ENCODE measurements at regions of chr6 and their contacts with region 1.

Region 1: DNA sequence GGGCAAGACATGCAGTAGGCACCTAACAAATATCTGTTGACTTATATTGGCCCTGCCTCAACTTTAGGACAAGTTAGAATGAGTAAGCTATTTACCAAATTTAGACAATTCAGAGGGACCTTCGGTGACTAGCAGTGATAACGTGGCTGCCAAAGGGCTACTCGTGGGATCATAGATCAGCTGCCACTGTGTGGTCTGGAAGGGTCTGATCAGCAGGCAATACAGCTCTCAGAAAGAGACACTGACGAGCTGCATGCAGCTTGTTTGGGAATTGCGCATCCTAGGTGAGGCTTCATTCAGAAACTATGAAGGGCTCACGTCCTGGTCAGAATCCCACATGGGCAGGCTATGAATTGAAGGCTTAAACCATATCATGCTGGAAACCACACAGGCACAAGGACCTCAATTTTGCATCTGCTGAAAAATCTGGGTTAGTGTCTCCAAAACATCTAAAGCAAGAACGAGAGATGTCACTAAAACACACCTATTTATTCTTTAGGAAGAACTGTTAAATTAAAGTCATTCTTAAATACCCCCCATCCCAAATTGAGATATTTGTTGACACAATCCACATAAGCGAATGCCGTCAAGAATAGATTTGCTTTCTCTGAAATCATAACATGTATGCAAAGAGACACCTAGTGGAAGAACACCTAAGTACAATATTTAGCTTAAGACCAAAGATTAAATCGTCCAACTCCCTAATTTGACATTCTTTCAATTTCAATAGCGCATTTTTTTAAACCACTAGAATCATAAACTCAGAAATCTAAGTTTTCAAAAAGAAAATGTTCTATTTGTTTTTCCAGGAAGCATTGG is 79.6 kb downstream of the IPCEF1 start:
- H3K4me3 ChIP-seq: no peak overlapping the region
- H3K27ac ChIP-seq: no peak overlapping the region
- H3K4me1 ChIP-seq: no peaks in the 10 kb centered on the region
- CTCF ChIP-seq: no peak

Region 2: GRCh38 chr6:154156135-154156896 is 120.7 kb before region 1 on chr6:
- CTCF ChIA-PET with region 1: interaction called, 53 read pairs
- POLR2A ChIA-PET with region 1: no interaction called
- H3K4me3 ChIP-seq: no peak overlapping the region
- H3K27ac ChIP-seq: no peak overlapping the region
- H3K4me1 ChIP-seq: no peaks in the 10 kb centered on the region
- CTCF ChIP-seq: peak; percentile 67

Region 3: GRCh38 chr6:154258064-154258757 is 18.8 kb before region 1 on chr6:
- CTCF ChIA-PET with region 1: interaction called, 10 read pairs
- POLR2A ChIA-PET with region 1: no interaction called
- H3K4me3 ChIP-seq: no peak overlapping the region
- H3K27ac ChIP-seq: no peak overlapping the region
- H3K4me1 ChIP-seq: no peaks in the 10 kb centered on the region
- CTCF ChIP-seq: no peak

Region 4: GRCh38 chr6:154292890-154293398 is 15.9 kb after region 1 on chr6:
- CTCF ChIA-PET with region 1: interaction called, 10 read pairs
- POLR2A ChIA-PET with region 1: no interaction called
- H3K4me3 ChIP-seq: no peak overlapping the region
- H3K27ac ChIP-seq: no peak overlapping the region
- H3K4me1 ChIP-seq: no peaks in the 10 kb centered on the region
- CTCF ChIP-seq: no peak

Region 5: DNA sequence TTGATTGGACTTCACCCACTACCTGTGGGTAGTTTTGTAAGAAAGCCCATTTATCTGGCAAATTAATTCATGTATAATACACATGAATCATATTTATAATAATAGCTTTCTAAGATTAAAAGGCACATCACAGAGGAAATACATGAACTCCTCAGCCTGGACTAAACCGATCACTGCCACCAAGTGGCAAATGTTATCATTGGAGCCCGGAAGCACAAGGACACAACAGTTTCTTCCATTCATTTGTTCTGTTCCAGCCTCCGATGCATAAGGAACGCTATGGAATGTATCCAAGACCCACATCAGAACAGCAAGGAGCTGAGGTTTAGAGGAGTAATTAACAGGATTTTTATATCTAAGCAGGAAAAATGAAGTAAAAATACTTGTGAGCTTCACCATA is 93.5 kb after region 1 on chr6:
- CTCF ChIA-PET with region 1: interaction called, 13 read pairs
- POLR2A ChIA-PET with region 1: no interaction called
- H3K4me3 ChIP-seq: no peak overlapping the region
- H3K27ac ChIP-seq: no peak overlapping the region
- H3K4me1 ChIP-seq: no peaks in the 10 kb centered on the region
- CTCF ChIP-seq: peak; percentile 42; the same call in 1 of the 2 replicates

Region 6: GRCh38 chr6:154428897-154429296 is 151.9 kb after region 1 on chr6:
- CTCF ChIA-PET with region 1: no interaction called
- POLR2A ChIA-PET with region 1: no interaction called
- H3K4me3 ChIP-seq: no peak overlapping the region
- H3K27ac ChIP-seq: no peak overlapping the region
- H3K4me1 ChIP-seq: no peaks in the 10 kb centered on the region
- CTCF ChIP-seq: no peak

Region 7: DNA sequence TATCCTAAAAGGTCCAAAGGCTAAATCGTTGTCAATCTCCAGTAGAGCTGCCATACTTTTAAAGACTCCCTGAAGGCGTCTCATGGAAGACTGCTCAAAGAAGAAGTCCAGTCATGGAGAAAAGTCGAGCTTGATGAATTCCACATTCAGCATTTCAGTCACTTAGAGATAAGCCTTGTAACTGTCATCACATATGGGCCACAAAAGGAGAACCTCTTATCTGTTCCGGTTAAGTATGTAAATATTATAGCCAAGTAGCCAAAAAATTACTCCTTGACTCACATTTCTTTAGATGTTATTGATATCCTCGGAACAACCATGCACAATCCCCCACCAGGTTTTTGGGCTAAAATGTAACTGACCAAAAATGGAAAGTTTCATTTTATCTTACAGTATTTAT is 243.3 kb after region 1 on chr6:
- CTCF ChIA-PET with region 1: no interaction called
- POLR2A ChIA-PET with region 1: no interaction called
- H3K4me3 ChIP-seq: no peak overlapping the region
- H3K27ac ChIP-seq: no peak overlapping the region
- H3K4me1 ChIP-seq: no peaks in the 10 kb centered on the region
- CTCF ChIP-seq: no peak

Measured in HEK293 (cell line).